ENCODE measurements at regions of chr1 and their contacts with region 1.

Region 1: GRCh38 chr1:178869119-178869697 is 1.7 kb downstream of the ANGPTL1 start:
- DNase-seq: no peak

Region 2: DNA sequence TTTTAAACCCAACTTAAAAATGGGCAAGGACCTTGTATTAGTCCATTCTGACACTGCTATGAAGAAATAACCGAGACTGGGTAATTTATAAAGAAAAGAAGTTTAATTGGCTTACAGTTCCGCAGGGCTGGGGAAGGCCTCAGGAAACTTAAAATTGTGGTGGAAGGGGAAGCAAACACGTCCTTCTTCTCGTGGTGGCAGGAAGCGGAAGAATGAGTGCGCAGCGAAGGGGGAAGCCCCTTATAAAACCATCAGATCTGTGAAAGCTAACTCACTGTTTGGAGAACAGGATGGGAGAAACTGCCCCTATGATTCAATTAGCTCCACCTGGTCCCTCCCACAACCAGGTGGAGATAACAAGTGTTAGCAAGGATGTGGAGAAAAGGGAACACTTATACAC is 1137.0 kb before region 1 on chr1:
- intact Hi-C with region 1: no loop called
- DNase-seq: no peak

Region 3: GRCh38 chr1:178300352-178300699 is 568.9 kb before region 1 on chr1:
- intact Hi-C with region 1: loop called in 1 of 2 experiments (anchors 5 kb)
- DNase-seq: no peak

Region 4: DNA sequence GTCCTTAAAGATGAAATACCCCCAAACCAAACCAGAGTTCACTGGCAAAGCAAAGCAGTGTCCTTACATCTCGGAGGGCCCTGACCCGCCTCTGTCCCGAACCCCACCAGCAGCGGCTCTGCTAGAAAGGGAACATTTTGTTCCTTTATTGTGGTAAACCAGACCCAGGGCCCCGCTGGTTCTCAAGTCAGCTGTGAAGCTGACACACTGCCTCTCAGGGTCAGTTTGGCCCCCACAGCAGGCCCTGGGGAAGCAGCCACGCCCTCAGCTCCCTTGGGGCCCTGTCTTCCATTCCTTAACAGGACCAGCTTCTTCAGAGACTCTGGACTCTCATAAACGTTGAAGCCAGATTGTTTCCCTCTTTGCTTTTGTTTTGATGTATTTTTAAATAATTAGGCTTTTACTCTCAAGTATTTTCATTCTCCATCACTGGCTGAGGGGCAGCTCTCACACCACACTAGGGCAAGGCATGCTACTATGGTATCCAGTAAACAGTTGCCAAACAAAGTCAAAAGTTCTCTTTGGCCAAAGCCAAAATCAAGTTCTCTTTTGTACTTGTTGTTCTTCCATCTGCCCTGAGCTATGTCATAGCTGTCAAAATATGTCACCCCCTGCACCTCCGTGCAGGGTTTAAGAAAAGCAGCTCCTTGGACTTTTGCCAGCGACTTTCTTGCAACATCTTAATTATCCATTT is 62.8 kb after region 1 on chr1:
- intact Hi-C with region 1: loop called in 1 of 2 experiments (anchors 5 kb)
- DNase-seq: peak; percentile 94

Measured in posterior vena cava (tissue), 2 donors.